Ascending aorta (tissue), 2 donors: ENCODE measurements at regions of chr19 and their contacts with region 1.

Region 1: GRCh38 chr19:46850228-46851203 is at the start of gene AP2S1:
- DNase-seq: peak; percentile 94 to 99
- H3K4me3 ChIP-seq: peak within 1 kb of the TSS; percentile 81 to 93
- H3K27ac ChIP-seq: peak within 1 kb of the TSS; percentile 85 to 89
- H3K4me1 ChIP-seq: peaks cover 5 to 16% of the 10 kb centered on the region in 2 donors
- H3K27me3 ChIP-seq: no peaks in the 10 kb centered on the region
- CTCF ChIP-seq: no peak
- total RNA-seq, gene AP2S1: 96.6 TPM

Region 2: DNA sequence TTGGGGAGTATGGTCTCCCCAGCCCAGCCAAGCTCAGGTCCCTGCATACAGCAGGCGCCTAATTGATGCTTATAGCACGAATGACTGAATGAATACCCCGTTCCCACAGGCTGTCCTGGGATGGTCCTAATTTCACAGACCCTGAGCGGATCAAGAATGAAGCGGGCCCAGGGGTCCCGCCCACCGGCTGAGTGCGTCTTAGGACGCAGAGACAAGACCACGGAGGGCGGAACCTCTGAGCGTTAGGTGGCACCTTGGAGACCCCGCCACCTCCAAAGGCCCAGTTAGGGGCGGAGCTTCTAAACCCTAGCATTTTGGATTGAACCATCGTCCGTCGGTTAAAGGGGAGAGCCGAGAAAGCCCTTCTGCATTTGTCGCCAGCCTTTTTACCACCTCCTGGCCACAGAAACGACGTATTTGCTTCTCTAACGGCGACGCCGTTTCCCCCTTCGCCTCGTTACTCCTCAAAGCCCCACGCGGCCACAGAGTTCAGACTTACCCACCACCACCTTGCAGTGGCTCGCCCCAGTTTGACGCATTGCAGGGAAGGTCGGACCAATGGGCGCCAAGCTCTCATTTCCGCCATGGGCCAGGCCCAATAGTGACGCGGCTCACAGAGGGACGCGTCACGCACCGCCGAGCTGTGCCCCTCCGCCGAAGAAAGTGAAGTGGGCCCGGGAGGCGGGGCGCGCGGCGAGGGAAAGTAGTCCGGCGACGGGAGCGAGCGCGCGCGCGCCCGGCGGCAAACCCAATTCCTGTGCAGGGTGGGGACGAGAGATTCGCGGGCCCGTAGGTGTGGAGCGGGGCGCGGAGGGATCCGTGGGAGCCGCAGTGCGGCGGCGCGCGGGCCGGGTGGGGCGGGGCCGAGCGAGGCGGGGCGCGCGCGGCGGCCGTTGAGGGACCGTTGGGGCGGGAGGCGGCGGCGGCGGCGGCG is 249.9 kb before region 1 on chr19:
- intact Hi-C with region 1: loop called (anchors 2 kb)
- DNase-seq: peak; percentile 85 to 99
- H3K4me3 ChIP-seq: peak overlapping the region; percentile 88
- H3K27ac ChIP-seq: peak overlapping the region; percentile 93 to 98
- H3K4me1 ChIP-seq: peaks cover 9 to 31% of the 10 kb centered on the region in 2 donors
- H3K27me3 ChIP-seq: no peaks in the 10 kb centered on the region
- CTCF ChIP-seq: peak in 1 of 3 experiments; percentile 24

Region 3: DNA sequence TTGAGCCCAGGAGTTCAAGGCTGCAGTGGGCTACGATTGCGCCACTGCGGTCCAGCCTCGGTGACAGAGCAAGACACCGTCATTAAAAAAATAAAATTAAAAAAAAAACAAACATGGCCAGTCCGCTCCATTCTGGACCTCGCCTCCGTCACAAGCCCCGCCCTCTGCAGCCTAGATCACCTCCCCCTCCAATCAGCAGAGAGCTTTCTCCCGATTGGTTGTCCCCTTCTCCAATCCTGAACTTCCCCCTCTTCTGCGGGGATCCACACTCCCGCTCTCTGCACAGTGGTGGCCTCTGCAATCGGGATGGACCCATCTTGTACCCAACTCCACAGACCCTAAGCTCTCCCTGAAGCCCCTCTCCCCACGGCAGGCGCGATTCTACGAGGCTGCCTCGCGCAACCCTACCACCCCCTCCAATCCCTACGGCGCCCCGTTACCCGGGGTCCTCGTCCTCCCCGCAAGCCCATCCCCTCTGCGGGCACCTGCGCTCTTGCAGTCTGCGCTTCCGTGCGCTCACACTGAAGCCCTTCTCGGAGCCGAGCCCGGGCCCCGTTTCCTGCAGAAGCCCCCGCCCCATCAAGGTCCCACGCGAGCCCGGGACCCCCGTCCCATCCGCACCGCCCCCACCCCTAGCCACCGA is 197.4 kb after region 1 on chr19:
- intact Hi-C with region 1: loop called (anchors 2 kb)
- DNase-seq: peak; percentile 58 to 89
- H3K4me3 ChIP-seq: peak overlapping the region; percentile 77 to 83
- H3K27ac ChIP-seq: peak overlapping the region; percentile 80
- H3K4me1 ChIP-seq: peaks cover 0 to 4% of the 10 kb centered on the region in 2 donors
- H3K27me3 ChIP-seq: no peaks in the 10 kb centered on the region
- CTCF ChIP-seq: no peak